ENCODE measurements at regions of chr22 and their contacts with region 1.

Region 1: GRCh38 chr22:37218771-37219411 is 6.6 kb upstream of the SSTR3 start:
- DNase-seq: peak; percentile 36 to 94 (median 86)
- H3K4me3 ChIP-seq: peak overlapping the region; percentile 53
- H3K4me3 Mint-ChIP-seq: peak overlapping the region; percentile 6 to 68 (median 61)
- H3K27ac ChIP-seq: no peak overlapping the region
- H3K27ac Mint-ChIP-seq: peak overlapping the region; percentile 46 to 99 (median 94)
- H3K4me1 ChIP-seq: peaks cover 76% of the 10 kb centered on the region
- H3K4me1 Mint-ChIP-seq: peaks cover 63 to 83% (median 76%) of the 10 kb centered on the region in 3 donors
- H3K27me3 ChIP-seq: no peaks in the 10 kb centered on the region
- H3K27me3 Mint-ChIP-seq: no peaks in the 10 kb centered on the region

Region 2: GRCh38 chr22:37148742-37149665 is 69.9 kb before region 1 on chr22:
- CTCF ChIA-PET with region 1: no interaction called
- POLR2A ChIA-PET with region 1: no interaction called
- DNase-seq: no peak
- H3K4me3 ChIP-seq: peak overlapping the region; percentile 86
- H3K4me3 Mint-ChIP-seq: peak overlapping the region; percentile 88 to 97 (median 96)
- H3K27ac ChIP-seq: peak overlapping the region; percentile 88
- H3K27ac Mint-ChIP-seq: peak overlapping the region; percentile 96 to 100 (median 98)
- H3K4me1 ChIP-seq: peaks cover 67% of the 10 kb centered on the region
- H3K4me1 Mint-ChIP-seq: peaks cover 62 to 70% (median 65%) of the 10 kb centered on the region in 3 donors
- H3K27me3 ChIP-seq: no peaks in the 10 kb centered on the region
- H3K27me3 Mint-ChIP-seq: peaks cover 0 to 4% of the 10 kb centered on the region in 2 donors

Region 3: GRCh38 chr22:37237371-37238268 is 18.7 kb after region 1 on chr22:
- CTCF ChIA-PET with region 1: interaction called, 19 read pairs
- POLR2A ChIA-PET with region 1: interaction called, 33 read pairs
- DNase-seq: peak in 1 of 5 donors; percentile 78
- H3K4me3 ChIP-seq: peak overlapping the region; percentile 49
- H3K4me3 Mint-ChIP-seq: peak overlapping the region; percentile 70 to 98 (median 85)
- H3K27ac ChIP-seq: peak overlapping the region; percentile 40
- H3K27ac Mint-ChIP-seq: peak overlapping the region; percentile 93 to 100 (median 99)
- H3K4me1 ChIP-seq: peaks cover 96% of the 10 kb centered on the region
- H3K4me1 Mint-ChIP-seq: peaks cover 94 to 100% (median 100%) of the 10 kb centered on the region in 3 donors
- H3K27me3 ChIP-seq: no peaks in the 10 kb centered on the region
- H3K27me3 Mint-ChIP-seq: no peaks in the 10 kb centered on the region

Region 4: DNA sequence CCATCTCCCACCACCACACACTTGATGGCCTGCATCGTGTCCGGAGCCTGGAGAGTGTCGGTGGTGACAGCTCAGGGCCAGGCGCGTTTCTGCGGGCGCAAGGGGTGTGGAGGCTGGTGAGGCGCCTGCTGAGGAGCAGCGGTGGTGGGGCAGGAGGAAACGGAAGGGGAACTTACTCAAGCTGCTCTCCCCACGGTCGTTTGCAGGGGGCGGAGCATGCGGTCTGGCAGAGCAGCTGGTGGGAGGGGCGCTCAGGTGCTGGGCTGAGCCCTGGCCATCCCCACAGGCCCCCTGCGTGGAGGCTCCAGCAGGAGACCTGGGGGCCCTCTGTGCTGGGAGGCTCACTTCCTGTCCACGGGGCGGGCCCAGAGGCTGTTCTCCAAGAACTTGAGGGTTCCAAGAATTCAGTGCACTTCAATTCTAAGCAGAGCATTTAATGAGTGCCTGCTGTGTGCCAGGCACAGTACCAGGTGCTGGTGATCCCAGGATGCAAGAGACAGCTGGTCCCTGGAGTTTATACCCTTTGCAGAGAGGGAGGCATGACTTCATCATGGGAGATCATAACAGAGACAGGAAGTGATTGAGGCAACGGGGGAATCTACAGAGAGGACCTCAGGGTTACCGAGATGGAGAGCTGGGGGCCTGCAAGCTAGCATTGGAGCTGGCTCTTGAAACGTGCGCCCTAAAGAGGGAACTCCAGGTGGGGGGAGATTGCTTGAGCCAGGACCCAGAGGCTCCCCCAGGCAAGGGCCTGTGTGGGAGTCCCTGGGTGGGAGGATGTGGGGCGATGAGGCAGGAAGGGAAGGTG is 25.4 kb after region 1 on chr22 and contains the start of gene RAC2:
- CTCF ChIA-PET with region 1: interaction called, 19 read pairs
- POLR2A ChIA-PET with region 1: interaction called, 33 read pairs
- DNase-seq: peak; percentile 77 to 93 (median 83)
- H3K4me3 ChIP-seq: peak within 1 kb of the TSS; percentile 100
- H3K4me3 Mint-ChIP-seq: peak within 1 kb of the TSS; percentile 88 to 98 (median 93)
- H3K27ac ChIP-seq: peak within 1 kb of the TSS; percentile 91
- H3K27ac Mint-ChIP-seq: peak within 1 kb of the TSS; percentile 79 to 100 (median 98)
- H3K4me1 ChIP-seq: peaks cover 48% of the 10 kb centered on the region
- H3K4me1 Mint-ChIP-seq: peaks cover 49 to 58% (median 50%) of the 10 kb centered on the region in 3 donors
- H3K27me3 ChIP-seq: no peaks in the 10 kb centered on the region
- H3K27me3 Mint-ChIP-seq: no peaks in the 10 kb centered on the region
- total RNA-seq, gene RAC2: 433 to 452 TPM

Region 5: GRCh38 chr22:37284805-37285355 is 66.0 kb after region 1 on chr22:
- CTCF ChIA-PET with region 1: no interaction called
- POLR2A ChIA-PET with region 1: no interaction called
- DNase-seq: peak; percentile 40 to 73 (median 58)
- H3K4me3 ChIP-seq: peak overlapping the region; percentile 89
- H3K4me3 Mint-ChIP-seq: peak overlapping the region; percentile 89 to 98 (median 95)
- H3K27ac ChIP-seq: peak overlapping the region; percentile 47
- H3K27ac Mint-ChIP-seq: peak overlapping the region; percentile 77 to 100 (median 96)
- H3K4me1 ChIP-seq: peaks cover 48% of the 10 kb centered on the region
- H3K4me1 Mint-ChIP-seq: peaks cover 63 to 79% (median 77%) of the 10 kb centered on the region in 3 donors
- H3K27me3 ChIP-seq: no peaks in the 10 kb centered on the region
- H3K27me3 Mint-ChIP-seq: peaks cover 0 to 1% of the 10 kb centered on the region in 2 donors